ENCODE measurements at regions of chr20 and their contacts with region 1.

Region 1: GRCh38 chr20:63802469-63803240 is 28.4 kb downstream of the ZBTB46 start:
- DNase-seq: no peak
- H3K4me3 ChIP-seq: no peak overlapping the region
- CTCF ChIP-seq: no peak

Region 2: GRCh38 chr20:63718996-63719395 is 83.7 kb before region 1 on chr20:
- CTCF ChIA-PET with region 1: no interaction called
- POLR2A ChIA-PET with region 1: no interaction called
- DNase-seq: no peak
- H3K4me3 ChIP-seq: no peak overlapping the region
- CTCF ChIP-seq: no peak

Region 3: DNA sequence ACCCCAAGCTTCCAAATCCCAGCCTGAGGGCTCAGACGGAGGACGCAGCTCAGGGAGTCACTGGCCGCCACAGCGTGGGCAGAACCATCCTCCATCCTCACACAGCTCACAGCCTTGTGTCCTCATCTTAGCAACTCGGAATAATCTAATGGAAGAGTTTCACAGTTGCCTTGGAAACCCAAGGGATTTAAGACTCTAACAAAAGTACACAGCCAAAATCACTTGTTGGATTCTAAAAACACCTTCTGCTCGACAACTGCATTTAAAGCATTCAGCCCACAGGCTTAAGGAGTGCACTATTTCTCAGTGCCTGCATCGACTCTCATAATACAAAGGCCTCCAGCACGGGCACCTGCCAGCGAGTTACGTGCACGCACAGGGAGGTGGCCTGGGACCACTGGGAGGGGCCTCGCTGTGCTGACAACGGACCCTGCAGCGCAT is 16.9 kb before region 1 on chr20:
- CTCF ChIA-PET with region 1: interaction called, 17 read pairs
- POLR2A ChIA-PET with region 1: no interaction called
- DNase-seq: no peak
- H3K4me3 ChIP-seq: no peak overlapping the region
- CTCF ChIP-seq: peak; percentile 1